ENCODE measurements at regions of chr5 and their contacts with region 1.

Region 1: DNA sequence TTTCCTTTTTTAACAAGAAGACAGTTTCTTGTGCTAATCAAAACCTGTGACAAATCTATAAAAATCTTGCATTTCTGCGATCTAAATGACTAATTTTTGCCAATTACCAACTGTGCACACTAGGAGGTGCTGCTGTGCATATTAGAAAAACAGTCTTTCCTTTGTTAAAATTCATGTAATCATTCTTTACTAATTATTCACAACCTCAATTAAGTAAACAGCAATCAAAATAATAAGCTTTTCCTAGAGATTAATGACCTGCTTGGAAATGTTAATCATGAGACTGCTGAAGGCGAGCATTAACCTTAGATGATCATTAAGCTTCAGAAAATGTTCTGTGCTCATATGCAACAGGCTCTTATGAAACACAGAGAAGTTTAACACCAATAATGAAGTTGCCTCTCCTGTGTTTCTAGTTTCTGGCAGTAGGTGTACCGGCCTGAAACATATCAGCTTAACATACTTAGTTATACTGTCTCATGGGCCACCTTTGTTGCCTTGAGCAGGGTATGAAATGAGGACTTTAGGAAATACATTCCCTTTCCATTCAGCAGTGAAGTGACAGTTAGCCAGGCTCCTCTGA is 17.7 kb downstream of the RFESD start:
- DNase-seq: no peak
- H3K4me3 ChIP-seq: no peak overlapping the region
- H3K27ac ChIP-seq: no peak overlapping the region
- H3K27me3 ChIP-seq: no peaks in the 10 kb centered on the region
- CTCF ChIP-seq: peak; percentile 80

Region 2: DNA sequence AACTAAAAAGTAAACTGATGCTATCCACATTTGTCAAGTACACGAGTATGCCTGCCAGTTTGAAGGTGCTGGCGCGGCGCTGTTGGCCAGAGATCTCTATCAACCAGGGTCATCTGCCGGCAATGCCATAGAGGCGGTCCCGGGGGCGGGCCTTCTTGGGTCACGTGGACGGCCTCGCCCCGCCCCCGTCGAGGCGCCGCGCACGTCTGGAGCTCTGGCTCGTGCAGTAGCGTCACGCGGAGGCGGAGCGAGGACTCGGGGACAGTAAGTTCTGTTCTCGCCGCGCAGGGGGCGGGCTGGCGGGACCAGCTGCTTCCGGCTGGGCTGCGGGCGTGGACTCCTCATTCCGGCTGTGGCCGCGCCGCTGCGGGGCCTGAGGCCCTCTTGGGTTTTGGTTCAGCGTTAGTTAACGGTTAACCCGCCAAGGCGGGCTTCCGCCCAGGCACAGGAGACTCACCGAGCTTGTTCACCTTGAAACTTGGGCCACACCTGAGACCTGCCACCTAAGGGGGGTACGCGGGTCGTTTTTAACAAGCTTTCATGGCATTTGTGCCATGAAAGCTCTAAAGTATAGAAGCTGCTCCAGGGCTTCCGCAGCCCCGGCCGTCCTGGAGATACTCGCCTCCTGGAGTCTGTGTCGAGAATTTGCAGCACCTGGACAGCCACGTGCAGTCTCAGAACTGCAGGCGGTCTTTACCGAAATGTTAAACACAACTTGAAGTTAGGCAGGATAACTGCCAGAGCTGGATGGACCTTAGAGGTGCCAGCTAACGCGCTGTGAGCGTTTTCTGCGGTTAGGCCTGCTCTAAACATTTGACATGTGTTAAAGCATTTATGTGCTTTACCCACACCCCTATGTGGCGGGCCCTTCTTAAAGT is 17.5 kb before region 1 on chr5 and contains the start of gene RFESD:
- CTCF ChIA-PET with region 1: interaction called, 36 read pairs
- POLR2A ChIA-PET with region 1: interaction called, 5 read pairs
- DNase-seq: peak; percentile 82
- H3K4me3 ChIP-seq: peak within 1 kb of the TSS; percentile 61
- H3K27ac ChIP-seq: peak within 1 kb of the TSS; percentile 82
- H3K27me3 ChIP-seq: no peaks in the 10 kb centered on the region
- CTCF ChIP-seq: 0 out of 2 replicates have a peak, but pooled peaks have one; percentile 18
- polyA plus RNA-seq, gene RFESD: 3.0 and 3.8 TPM in 2 replicates

Region 3: DNA sequence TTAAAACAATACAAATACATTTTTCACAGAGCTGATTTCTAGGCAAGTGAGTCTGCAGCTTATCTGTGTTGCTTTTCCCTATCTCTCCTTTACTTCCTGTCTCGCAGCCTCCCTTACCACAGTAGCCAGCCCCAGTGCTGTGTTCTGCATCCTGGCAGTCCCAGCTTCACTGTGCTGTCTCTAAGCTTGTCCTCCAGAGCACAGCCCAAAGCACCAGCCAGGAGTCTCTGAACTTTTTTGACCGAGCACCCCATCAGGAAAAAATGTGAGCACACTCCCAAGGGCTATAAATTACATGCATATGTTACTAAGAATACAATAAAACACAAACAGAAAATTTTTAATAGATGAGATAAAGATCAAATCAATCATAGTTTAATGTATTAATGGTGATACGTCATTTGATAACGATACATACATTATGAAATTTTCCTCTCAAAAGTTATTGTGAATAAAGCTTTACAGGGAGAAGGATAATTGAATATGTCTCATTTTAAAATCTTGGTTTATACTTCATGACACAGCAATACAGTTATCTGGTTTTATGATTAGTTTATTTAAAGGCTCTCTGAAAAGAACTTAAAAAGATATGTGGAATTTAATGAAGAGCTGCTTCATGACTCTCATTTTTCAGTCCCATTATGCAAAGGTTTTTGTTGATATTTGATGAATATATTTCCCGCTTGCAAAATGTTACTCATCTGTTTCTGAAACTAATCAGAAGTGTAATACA is 59.5 kb after region 1 on chr5:
- CTCF ChIA-PET with region 1: interaction called, 12 read pairs
- POLR2A ChIA-PET with region 1: no interaction called
- DNase-seq: no peak
- H3K4me3 ChIP-seq: no peak overlapping the region
- H3K27ac ChIP-seq: no peak overlapping the region
- H3K27me3 ChIP-seq: no peaks in the 10 kb centered on the region
- CTCF ChIP-seq: no peak

Region 4: GRCh38 chr5:95741458-95741857 is 77.2 kb after region 1 on chr5:
- CTCF ChIA-PET with region 1: interaction called, 31 read pairs
- POLR2A ChIA-PET with region 1: interaction called, 4 read pairs
- DNase-seq: no peak
- H3K4me3 ChIP-seq: no peak overlapping the region
- H3K27ac ChIP-seq: no peak overlapping the region
- H3K27me3 ChIP-seq: no peaks in the 10 kb centered on the region
- CTCF ChIP-seq: no peak

Region 5: DNA sequence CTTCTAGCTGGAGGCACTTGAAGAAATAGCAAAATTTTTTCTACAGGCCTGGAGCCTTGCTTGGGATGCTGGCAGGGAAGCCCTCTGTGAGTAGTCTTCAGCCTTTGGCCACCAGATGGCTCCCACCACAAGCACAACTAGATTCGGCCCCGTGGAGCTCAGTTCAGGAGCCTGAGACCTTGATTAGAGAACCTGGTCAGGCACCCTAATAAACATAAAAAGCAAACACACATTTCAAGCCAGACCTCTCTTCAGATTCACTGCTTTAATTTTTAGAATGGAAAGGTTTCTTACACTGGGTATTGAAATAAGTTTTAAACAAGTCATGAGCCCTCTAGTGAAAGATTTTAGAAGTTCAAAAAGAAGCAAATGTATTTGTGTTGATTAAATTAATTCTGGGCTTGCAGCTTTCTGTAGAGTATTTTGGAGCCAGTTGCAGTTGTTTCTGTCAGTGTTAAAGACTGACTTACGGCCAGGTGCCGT is 116.8 kb after region 1 on chr5:
- CTCF ChIA-PET with region 1: interaction called, 18 read pairs
- POLR2A ChIA-PET with region 1: no interaction called
- DNase-seq: no peak
- H3K4me3 ChIP-seq: no peak overlapping the region
- H3K27ac ChIP-seq: no peak overlapping the region
- H3K27me3 ChIP-seq: no peaks in the 10 kb centered on the region
- CTCF ChIP-seq: peak; percentile 88

Measured in AG04450 (cell line).